Caco-2 (cell line): ENCODE measurements at regions of chr6 and their contacts with region 1.

Region 1: GRCh38 chr6:18122124-18123093 is at the start of gene NHLRC1:
- DNase-seq: peak; percentile 81 to 90
- H3K4me3 ChIP-seq: peak within 1 kb of the TSS; percentile 70
- H3K4me3 Mint-ChIP-seq: peak within 1 kb of the TSS; percentile 76
- H3K27ac Mint-ChIP-seq: peak within 1 kb of the TSS; percentile 52
- H3K4me1 ChIP-seq: peaks cover 7% of the 10 kb centered on the region; the same call in 1 of the 2 replicates
- H3K4me1 Mint-ChIP-seq: peaks cover 7% of the 10 kb centered on the region
- H3K27me3 ChIP-seq: no peaks in the 10 kb centered on the region; the same call in 1 of the 2 replicates
- H3K27me3 Mint-ChIP-seq: peaks cover 3% of the 10 kb centered on the region
- CTCF ChIP-seq: peak; percentile 80 to 92
- total RNA-seq, gene NHLRC1: 1.6 and 2.1 TPM in 2 replicates

Region 2: GRCh38 chr6:17156112-17156921 is 966.1 kb before region 1 on chr6:
- CTCF ChIA-PET with region 1: no interaction called
- POLR2A ChIA-PET with region 1: no interaction called
- intact Hi-C with region 1: loop called (anchors 2 kb)
- DNase-seq: peak; percentile 47 to 70
- H3K4me3 ChIP-seq: no peak overlapping the region
- H3K4me3 Mint-ChIP-seq: no peak overlapping the region
- H3K27ac Mint-ChIP-seq: no peak overlapping the region
- H3K4me1 ChIP-seq: no peaks in the 10 kb centered on the region
- H3K4me1 Mint-ChIP-seq: no peaks in the 10 kb centered on the region
- H3K27me3 ChIP-seq: no peaks in the 10 kb centered on the region
- H3K27me3 Mint-ChIP-seq: peaks cover 4% of the 10 kb centered on the region
- CTCF ChIP-seq: peak; percentile 61 to 65

Region 3: DNA sequence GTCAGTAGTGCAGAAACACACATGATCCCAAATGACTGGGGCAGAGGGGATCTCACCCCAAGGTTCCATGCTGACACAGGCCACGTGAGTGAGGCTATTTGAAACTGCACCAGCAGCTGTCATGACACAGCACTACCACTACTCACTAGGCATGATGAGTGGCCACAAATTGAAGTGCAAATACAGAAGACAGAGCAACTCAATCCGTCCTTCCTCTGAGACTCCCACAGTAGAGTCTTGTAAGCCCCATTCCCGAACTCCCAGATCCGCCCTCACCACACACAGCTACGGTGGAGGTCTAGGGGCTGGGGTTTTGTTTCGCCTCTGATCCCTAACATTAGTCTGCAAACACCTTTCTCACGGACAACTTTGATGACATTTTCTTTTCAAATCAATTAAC is 302.4 kb before region 1 on chr6:
- CTCF ChIA-PET with region 1: interaction called, 7 read pairs
- POLR2A ChIA-PET with region 1: no interaction called
- intact Hi-C with region 1: loop called (anchors 5 kb)
- DNase-seq: peak in 1 of 2 experiments; percentile 9
- H3K4me3 ChIP-seq: no peak overlapping the region
- H3K4me3 Mint-ChIP-seq: no peak overlapping the region
- H3K27ac Mint-ChIP-seq: no peak overlapping the region
- H3K4me1 ChIP-seq: peaks cover 17% of the 10 kb centered on the region
- H3K4me1 Mint-ChIP-seq: peaks cover 14% of the 10 kb centered on the region
- H3K27me3 ChIP-seq: no peaks in the 10 kb centered on the region
- H3K27me3 Mint-ChIP-seq: no peaks in the 10 kb centered on the region
- CTCF ChIP-seq: peak in 1 of 2 experiments; percentile 5

Region 4: DNA sequence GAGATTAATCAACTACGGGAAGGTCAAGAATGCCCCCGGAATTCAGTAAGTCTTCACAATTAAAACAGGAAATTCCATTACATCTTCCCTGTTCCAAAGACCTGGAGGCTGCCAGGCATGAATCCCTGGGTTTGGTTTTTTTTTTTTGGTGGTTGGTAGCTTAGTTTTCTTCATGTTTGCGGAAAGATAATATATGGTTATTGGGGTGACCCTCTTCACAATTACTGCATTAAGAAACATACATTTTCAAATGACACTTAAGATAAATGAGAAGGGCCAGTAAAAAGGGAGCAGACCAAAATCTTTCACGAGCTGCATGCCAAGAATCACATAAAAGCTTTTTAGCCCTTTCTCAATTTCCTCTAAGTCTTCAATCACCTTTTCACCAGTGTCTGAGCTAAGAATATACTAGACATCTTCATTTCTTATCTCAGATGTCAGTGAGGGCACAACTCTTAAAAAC is 199.0 kb before region 1 on chr6:
- CTCF ChIA-PET with region 1: no interaction called
- POLR2A ChIA-PET with region 1: no interaction called
- intact Hi-C with region 1: no loop called
- DNase-seq: no peak
- H3K4me3 ChIP-seq: no peak overlapping the region
- H3K4me3 Mint-ChIP-seq: no peak overlapping the region
- H3K27ac Mint-ChIP-seq: no peak overlapping the region
- H3K4me1 ChIP-seq: peaks cover 8% of the 10 kb centered on the region
- H3K4me1 Mint-ChIP-seq: peaks cover 4% of the 10 kb centered on the region
- H3K27me3 ChIP-seq: no peaks in the 10 kb centered on the region
- H3K27me3 Mint-ChIP-seq: no peaks in the 10 kb centered on the region
- CTCF ChIP-seq: no peak

Region 5: GRCh38 chr6:17967668-17968518 is 154.5 kb before region 1 on chr6:
- CTCF ChIA-PET with region 1: no interaction called
- POLR2A ChIA-PET with region 1: no interaction called
- intact Hi-C with region 1: loop called (anchors 5 kb)
- DNase-seq: no peak
- H3K4me3 ChIP-seq: no peak overlapping the region
- H3K4me3 Mint-ChIP-seq: no peak overlapping the region
- H3K27ac Mint-ChIP-seq: no peak overlapping the region
- H3K4me1 ChIP-seq: no peaks in the 10 kb centered on the region
- H3K4me1 Mint-ChIP-seq: no peaks in the 10 kb centered on the region
- H3K27me3 ChIP-seq: no peaks in the 10 kb centered on the region
- H3K27me3 Mint-ChIP-seq: no peaks in the 10 kb centered on the region
- CTCF ChIP-seq: no peak

Region 6: GRCh38 chr6:18042536-18043145 is 79.8 kb before region 1 on chr6:
- CTCF ChIA-PET with region 1: interaction called, 10 read pairs
- POLR2A ChIA-PET with region 1: no interaction called
- intact Hi-C with region 1: loop called (anchors 5 kb)
- DNase-seq: no peak
- H3K4me3 ChIP-seq: no peak overlapping the region
- H3K4me3 Mint-ChIP-seq: peak overlapping the region; percentile 9
- H3K27ac Mint-ChIP-seq: peak overlapping the region; percentile 81
- H3K4me1 ChIP-seq: peaks cover 7% of the 10 kb centered on the region
- H3K4me1 Mint-ChIP-seq: peaks cover 14% of the 10 kb centered on the region
- H3K27me3 ChIP-seq: no peaks in the 10 kb centered on the region
- H3K27me3 Mint-ChIP-seq: no peaks in the 10 kb centered on the region
- CTCF ChIP-seq: no peak

Region 7: GRCh38 chr6:18147160-18147559 is 24.8 kb after region 1 on chr6:
- CTCF ChIA-PET with region 1: no interaction called
- POLR2A ChIA-PET with region 1: no interaction called
- intact Hi-C with region 1: no loop called
- DNase-seq: no peak
- H3K4me3 ChIP-seq: no peak overlapping the region
- H3K4me3 Mint-ChIP-seq: no peak overlapping the region
- H3K27ac Mint-ChIP-seq: no peak overlapping the region
- H3K4me1 ChIP-seq: no peaks in the 10 kb centered on the region; the same call in 1 of the 2 replicates
- H3K4me1 Mint-ChIP-seq: no peaks in the 10 kb centered on the region
- H3K27me3 ChIP-seq: no peaks in the 10 kb centered on the region
- H3K27me3 Mint-ChIP-seq: no peaks in the 10 kb centered on the region
- CTCF ChIP-seq: no peak